ENCODE measurements at regions of chr14 and their contacts with region 1.

Region 1: GRCh38 chr14:75307700-75308379 is 29.2 kb downstream of the FOS start:
- DNase-seq: peak; percentile 92
- H3K4me3 Mint-ChIP-seq: no peak overlapping the region
- H3K27ac Mint-ChIP-seq: no peak overlapping the region
- H3K4me1 Mint-ChIP-seq: peaks cover 16% of the 10 kb centered on the region
- H3K27me3 Mint-ChIP-seq: no peaks in the 10 kb centered on the region

Region 2: DNA sequence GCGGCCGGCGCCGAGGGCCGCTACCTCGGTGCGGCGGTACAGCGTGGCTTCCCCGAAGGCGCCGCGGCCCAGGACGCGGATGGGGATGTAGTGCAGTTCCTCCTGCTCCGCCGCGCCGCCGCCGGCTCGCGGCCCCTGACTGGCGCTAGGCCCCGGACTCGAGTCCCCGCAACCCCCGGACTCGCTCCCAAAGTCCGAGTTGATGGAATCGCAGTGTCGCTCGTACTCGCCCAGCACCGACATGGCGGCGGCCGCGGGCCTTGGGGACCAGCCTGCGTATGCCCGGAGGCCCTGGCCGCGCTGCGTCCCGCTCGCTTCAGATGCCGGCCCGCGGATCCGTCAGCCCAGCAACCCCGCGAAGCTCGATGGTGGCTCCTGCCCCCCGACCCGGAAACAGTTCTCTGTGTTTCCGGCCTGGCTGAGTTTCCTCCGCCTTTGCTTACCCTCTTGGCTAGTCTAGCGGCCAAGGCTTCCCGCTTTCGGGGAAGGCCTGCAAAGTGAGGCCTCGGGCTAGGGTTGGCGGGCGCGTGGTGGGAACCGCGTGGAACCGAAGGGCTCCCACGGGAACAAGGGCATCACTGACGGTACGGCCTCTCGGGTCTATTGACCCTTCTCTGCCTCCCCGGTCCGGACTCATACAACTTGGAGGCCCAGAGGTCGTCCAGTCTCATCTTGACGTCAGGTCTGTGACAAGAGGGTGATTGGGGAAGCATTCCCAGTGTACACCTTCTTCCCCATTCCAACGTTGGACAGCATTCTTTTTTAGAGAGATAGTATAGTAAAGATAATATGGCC is 181.0 kb before region 1 on chr14 and contains the start of gene NEK9:
- intact Hi-C with region 1: loop called (anchors 1 kb)
- DNase-seq: peak; percentile 97
- H3K4me3 Mint-ChIP-seq: peak within 1 kb of the TSS; percentile 97
- H3K27ac Mint-ChIP-seq: peak within 1 kb of the TSS; percentile 98
- H3K4me1 Mint-ChIP-seq: peaks cover 32% of the 10 kb centered on the region
- H3K27me3 Mint-ChIP-seq: no peaks in the 10 kb centered on the region
- total RNA-seq, gene NEK9: 66.6 and 68.8 TPM in 2 replicates

Region 3: GRCh38 chr14:75176142-75176820 is 131.6 kb before region 1 on chr14 and contains the start of gene TMED10:
- intact Hi-C with region 1: loop called (anchors 2 kb)
- DNase-seq: peak; percentile 97
- H3K4me3 Mint-ChIP-seq: peak within 1 kb of the TSS; percentile 92
- H3K27ac Mint-ChIP-seq: peak within 1 kb of the TSS; percentile 98
- H3K4me1 Mint-ChIP-seq: peaks cover 27% of the 10 kb centered on the region
- H3K27me3 Mint-ChIP-seq: peaks cover 8% of the 10 kb centered on the region
- total RNA-seq, gene TMED10: 192 and 200 TPM in 2 replicates

Region 4: GRCh38 chr14:75452900-75453747 is 145.3 kb after region 1 on chr14:
- intact Hi-C with region 1: loop called (anchors 5 kb)
- DNase-seq: no peak
- H3K4me3 Mint-ChIP-seq: no peak overlapping the region
- H3K27ac Mint-ChIP-seq: no peak overlapping the region
- H3K4me1 Mint-ChIP-seq: no peaks in the 10 kb centered on the region
- H3K27me3 Mint-ChIP-seq: no peaks in the 10 kb centered on the region

Region 5: GRCh38 chr14:75476274-75476995 is 168.6 kb after region 1 on chr14:
- intact Hi-C with region 1: no loop called
- DNase-seq: no peak
- H3K4me3 Mint-ChIP-seq: no peak overlapping the region
- H3K27ac Mint-ChIP-seq: no peak overlapping the region
- H3K4me1 Mint-ChIP-seq: no peaks in the 10 kb centered on the region
- H3K27me3 Mint-ChIP-seq: peaks cover 16% of the 10 kb centered on the region

Region 6: GRCh38 chr14:75560962-75561432 is 253.2 kb after region 1 on chr14:
- intact Hi-C with region 1: loop called (anchors 2 kb)
- DNase-seq: peak; percentile 84
- H3K4me3 Mint-ChIP-seq: peak overlapping the region; percentile 63
- H3K27ac Mint-ChIP-seq: peak overlapping the region; percentile 98
- H3K4me1 Mint-ChIP-seq: peaks cover 61% of the 10 kb centered on the region
- H3K27me3 Mint-ChIP-seq: no peaks in the 10 kb centered on the region